ENCODE measurements at regions of chr12 and their contacts with region 1.

Region 1: DNA sequence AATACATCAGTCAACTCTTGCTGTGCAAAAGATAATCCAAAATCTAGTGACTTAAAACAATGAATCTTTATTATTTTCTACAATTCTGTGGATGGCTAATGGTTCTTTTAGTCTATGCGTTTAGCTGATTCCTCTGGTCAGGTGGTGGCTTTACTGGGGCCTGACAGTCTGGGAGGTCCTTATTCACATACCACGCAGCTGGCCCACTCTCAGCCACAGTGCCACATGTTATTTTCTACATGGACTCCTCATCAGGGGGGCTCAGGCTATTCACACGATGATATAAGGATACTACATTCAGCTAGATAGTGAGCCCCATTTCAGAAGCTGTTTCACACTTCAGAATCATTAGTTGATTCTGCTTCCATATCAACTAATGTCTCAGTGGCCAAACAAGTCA is 287.5 kb upstream of the MGAT4C start:
- DNase-seq: no peak
- ATAC-seq: no peak
- H3K4me3 ChIP-seq: no peak overlapping the region
- H3K27ac ChIP-seq: no peak overlapping the region
- H3K4me1 ChIP-seq: no peaks in the 10 kb centered on the region
- H3K27me3 ChIP-seq: no peaks in the 10 kb centered on the region
- CTCF ChIP-seq: no peak

Region 2: GRCh38 chr12:86407620-86408208 is 136.0 kb before region 1 on chr12:
- CTCF ChIA-PET with region 1: no interaction called
- POLR2A ChIA-PET with region 1: no interaction called
- intact Hi-C with region 1: loop called (anchors 10 kb)
- DNase-seq: no peak
- ATAC-seq: no peak
- H3K4me3 ChIP-seq: no peak overlapping the region
- H3K27ac ChIP-seq: no peak overlapping the region
- H3K4me1 ChIP-seq: no peaks in the 10 kb centered on the region
- H3K27me3 ChIP-seq: no peaks in the 10 kb centered on the region
- CTCF ChIP-seq: no peak

Measured in PC-3 (cell line).